ENCODE measurements at regions of chr11 and their contacts with region 1.

Region 1: DNA sequence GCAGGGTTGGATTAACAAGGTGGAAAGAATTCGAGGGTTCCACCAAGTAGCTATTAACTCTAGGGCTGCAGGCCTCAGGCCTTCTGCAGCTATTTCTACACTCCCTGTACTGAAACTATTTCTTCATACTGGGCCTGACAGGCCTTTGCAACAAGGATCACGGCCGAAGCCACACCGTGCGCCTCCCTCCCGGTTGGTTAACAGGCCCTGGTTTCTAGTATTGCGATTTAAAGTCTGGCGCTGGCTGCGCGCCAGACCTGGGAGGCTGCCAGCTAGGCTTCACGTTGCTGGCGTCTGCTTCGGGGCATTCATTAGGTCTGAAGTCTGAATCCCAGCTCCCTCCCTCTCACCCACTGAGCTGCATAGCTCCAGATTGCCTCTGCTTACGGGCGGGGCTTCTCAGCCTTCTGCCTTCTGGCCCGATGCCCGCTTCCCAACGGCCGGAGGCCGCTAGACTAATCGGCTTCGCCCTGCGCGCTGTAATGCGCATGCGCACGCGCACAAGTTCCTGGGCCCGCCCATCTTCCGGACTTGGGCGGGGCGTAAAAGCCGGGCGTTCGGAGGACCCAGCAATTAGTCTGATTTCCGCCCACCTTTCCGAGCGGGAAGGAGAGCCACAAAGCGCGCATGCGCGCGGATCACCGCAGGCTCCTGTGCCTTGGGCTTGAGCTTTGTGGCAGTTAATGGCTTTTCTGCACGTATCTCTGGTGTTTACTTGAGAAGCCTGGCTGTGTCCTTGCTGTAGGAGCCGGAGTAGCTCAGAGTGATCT is 1.6 kb downstream of the LDHA start:
- DNase-seq: peak; percentile 98
- H3K4me3 ChIP-seq: peak overlapping the region; percentile 77
- H3K27me3 ChIP-seq: no peaks in the 10 kb centered on the region
- CTCF ChIP-seq: no peak

Region 2: DNA sequence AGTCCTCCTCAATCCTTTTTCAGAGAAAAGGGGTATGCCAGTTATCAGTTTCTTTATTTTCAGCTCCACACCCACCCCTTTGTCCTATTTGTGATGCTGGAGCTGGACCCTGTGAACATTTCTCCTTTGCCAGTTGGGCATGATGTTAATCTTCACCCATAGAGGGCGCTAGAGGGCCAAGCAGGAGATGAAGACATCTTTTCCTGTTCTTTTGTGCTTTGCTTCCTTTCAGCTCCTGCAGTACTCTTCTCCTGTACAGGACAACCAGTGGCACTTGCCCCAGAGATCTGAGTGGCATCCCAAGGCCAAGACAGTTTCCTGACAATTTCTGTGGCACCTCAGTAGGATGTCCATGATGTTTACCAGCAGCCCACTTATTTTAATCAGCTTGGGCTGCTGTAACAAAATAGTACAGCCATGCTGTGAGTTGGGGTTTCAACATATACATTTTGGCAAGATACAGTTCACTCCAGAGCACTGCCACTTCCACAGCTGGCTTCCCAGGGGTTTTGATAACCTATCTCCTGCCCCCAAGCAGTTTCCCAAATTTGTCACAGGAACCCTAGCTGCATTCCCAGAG is 152.0 kb before region 1 on chr11:
- CTCF ChIA-PET with region 1: interaction called, 21 read pairs
- POLR2A ChIA-PET with region 1: interaction called, 4 read pairs
- DNase-seq: peak; percentile 16
- H3K4me3 ChIP-seq: no peak overlapping the region
- H3K27me3 ChIP-seq: peaks cover 4% of the 10 kb centered on the region
- CTCF ChIP-seq: peak; percentile 94

Region 3: GRCh38 chr11:18253231-18253630 is 142.7 kb before region 1 on chr11:
- CTCF ChIA-PET with region 1: interaction called, 3 read pairs
- POLR2A ChIA-PET with region 1: interaction called, 18 read pairs
- DNase-seq: no peak
- H3K4me3 ChIP-seq: no peak overlapping the region
- H3K27me3 ChIP-seq: peaks cover 2% of the 10 kb centered on the region
- CTCF ChIP-seq: 0 out of 2 replicates have a peak, but pooled peaks have one; percentile 2

Region 4: GRCh38 chr11:18383388-18384156 is 12.3 kb before region 1 on chr11:
- CTCF ChIA-PET with region 1: interaction called, 18 read pairs
- POLR2A ChIA-PET with region 1: interaction called, 63 read pairs
- DNase-seq: peak; percentile 97
- H3K4me3 ChIP-seq: no peak overlapping the region
- H3K27me3 ChIP-seq: no peaks in the 10 kb centered on the region
- CTCF ChIP-seq: no peak

Region 5: DNA sequence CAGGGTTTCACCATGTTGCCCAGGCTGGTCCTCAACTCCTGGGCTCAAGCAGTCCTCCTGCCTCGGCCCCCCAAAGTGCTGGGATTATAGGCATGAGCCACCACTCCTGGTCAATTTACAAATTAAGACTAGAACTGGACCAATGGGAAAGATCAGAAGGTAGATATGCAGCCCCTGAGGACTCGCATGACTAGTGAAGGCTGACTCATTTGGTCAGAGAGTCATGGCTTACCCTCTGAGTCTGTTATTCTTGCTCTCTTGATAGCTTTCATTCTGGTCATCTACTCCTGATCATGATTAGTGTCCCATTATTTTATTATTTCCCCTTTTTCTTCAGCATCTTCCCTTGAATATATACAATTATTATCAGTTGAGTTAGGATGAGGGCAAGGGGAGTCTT is 57.0 kb after region 1 on chr11:
- CTCF ChIA-PET with region 1: no interaction called
- POLR2A ChIA-PET with region 1: no interaction called
- DNase-seq: no peak
- H3K4me3 ChIP-seq: no peak overlapping the region
- H3K27me3 ChIP-seq: peaks cover 3% of the 10 kb centered on the region; the same call in 1 of the 2 replicates
- CTCF ChIP-seq: no peak

Region 6: DNA sequence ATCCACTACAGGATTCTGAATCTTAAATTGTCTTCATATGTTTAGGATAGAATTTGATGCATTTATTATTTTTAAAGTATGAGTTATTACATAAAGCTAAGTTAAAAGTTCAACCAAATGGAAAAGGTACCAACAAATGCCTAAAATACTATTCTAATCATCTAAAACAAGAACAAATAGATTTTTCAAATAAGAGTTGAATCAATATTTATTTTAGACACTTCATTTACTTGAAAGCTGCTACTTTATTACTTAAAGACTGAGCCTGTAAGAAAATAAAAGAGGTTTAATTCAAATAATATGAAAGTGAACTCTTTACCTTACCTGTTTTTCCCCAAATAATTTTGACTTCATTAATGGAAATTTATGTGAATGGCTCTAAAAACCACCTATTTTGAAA is 76.7 kb after region 1 on chr11:
- CTCF ChIA-PET with region 1: no interaction called
- POLR2A ChIA-PET with region 1: no interaction called
- DNase-seq: no peak
- H3K4me3 ChIP-seq: no peak overlapping the region
- H3K27me3 ChIP-seq: no peaks in the 10 kb centered on the region
- CTCF ChIP-seq: no peak

Measured in BJ (cell line).